Activated CD4-positive, alpha-beta T cell treated with anti-CD3 and anti-CD28 coated beads, Interleukin-2, amount 10 ng/mL, durations not matched to agents 24 days and 14 days (primary cell): ENCODE measurements at regions of chr6 and their contacts with region 1.

Region 1: DNA sequence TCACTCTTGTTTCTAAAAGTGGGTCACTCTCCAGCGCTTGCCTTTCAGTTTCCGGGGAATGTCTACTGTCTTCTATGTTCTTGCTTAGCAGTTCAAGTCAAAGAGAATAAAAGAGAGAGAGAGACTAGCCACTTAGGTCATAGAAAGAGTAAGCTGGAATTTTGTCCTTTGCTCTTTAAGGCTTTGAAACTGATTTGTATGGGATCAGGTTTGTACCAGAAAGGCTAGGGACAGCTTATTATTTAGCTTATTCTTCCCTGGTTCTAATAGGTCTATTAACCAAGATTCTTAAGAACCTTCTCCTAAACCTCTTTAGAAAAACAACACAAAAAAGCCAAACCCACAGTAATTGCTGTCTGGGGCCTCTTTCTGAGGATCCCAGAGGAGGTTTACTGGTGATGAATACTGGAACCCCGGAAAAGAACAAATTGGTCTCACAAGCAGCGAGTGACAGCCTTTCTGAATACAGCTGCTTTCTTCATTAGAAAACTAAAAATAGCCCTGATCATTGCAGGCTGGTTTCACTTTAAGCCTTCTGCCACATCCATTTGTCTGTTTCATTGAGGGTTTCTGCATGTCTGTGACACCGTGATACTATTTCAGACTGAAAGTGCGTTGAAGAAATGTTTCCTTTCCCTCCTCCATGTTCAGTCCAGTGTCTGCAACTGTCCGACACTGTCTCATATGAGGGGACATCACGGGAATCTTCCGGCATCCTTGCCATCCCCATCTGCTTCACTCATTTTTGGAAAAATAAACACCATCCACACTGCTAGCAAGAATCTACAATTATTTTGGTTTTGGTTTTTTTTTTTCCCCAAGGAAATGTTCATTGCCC is 75.1 kb upstream of the ATXN1 start:
- DNase-seq: peak; percentile 66
- H3K4me3 Mint-ChIP-seq: peak overlapping the region; percentile 61
- H3K27ac Mint-ChIP-seq: peak overlapping the region; percentile 71
- H3K4me1 Mint-ChIP-seq: peaks cover 30% of the 10 kb centered on the region
- H3K27me3 Mint-ChIP-seq: peaks cover 10% of the 10 kb centered on the region

Region 2: GRCh38 chr6:16651871-16652270 is 184.5 kb before region 1 on chr6:
- intact Hi-C with region 1: loop called (anchors 10 kb)
- DNase-seq: peak; percentile 83
- H3K4me3 Mint-ChIP-seq: peak overlapping the region; percentile 61
- H3K27ac Mint-ChIP-seq: peak overlapping the region; percentile 70
- H3K4me1 Mint-ChIP-seq: peaks cover 59% of the 10 kb centered on the region
- H3K27me3 Mint-ChIP-seq: no peaks in the 10 kb centered on the region

Region 3: DNA sequence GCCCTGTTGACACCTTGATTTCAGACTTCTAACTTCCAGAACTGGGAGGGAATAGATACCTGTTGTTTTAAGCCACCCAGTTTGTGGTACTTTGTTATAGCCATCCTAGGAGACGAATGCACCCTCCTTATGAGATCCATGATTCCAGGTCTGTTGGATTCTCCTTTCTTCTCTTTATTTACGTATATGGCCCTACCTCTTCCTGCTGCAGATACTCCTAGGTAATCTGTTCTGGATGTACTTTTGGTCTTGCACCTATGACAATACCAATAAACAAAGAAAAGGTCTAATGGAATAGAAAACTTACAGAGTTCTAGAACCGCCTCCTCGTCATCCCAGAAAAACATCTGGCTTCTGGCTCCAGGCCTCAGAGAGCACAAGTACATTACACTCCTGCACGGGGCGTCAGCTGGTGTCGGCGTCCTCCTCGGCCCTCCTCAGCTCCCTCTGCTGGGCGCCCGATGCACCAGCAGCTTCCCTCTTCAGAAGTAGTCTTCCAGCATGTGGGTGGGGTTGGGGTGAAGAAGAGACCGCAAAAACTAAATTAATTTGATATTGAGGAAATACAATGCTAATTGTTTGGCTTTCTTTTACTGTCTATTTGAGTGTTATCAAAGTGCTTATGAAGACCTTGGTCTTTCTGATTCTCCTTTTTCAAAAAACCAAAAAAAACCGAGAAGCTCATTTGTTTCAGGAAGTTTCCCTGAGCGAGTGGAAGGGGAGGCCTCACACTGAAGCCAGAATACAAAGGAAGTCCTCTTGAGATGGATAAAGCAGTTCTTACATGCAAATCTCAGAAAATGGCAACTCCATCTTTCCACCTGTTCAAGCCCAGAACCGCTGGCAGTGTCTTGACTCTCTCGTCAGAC is 65.4 kb before region 1 on chr6:
- intact Hi-C with region 1: loop called (anchors 2 kb)
- DNase-seq: peak; percentile 92
- H3K4me3 Mint-ChIP-seq: peak overlapping the region; percentile 58
- H3K27ac Mint-ChIP-seq: peak overlapping the region; percentile 21
- H3K4me1 Mint-ChIP-seq: peaks cover 49% of the 10 kb centered on the region
- H3K27me3 Mint-ChIP-seq: peaks cover 4% of the 10 kb centered on the region

Region 4: GRCh38 chr6:16949716-16950115 is 113.4 kb after region 1 on chr6:
- intact Hi-C with region 1: loop called (anchors 2 kb)
- DNase-seq: no peak
- H3K4me3 Mint-ChIP-seq: no peak overlapping the region
- H3K27ac Mint-ChIP-seq: no peak overlapping the region
- H3K4me1 Mint-ChIP-seq: peaks cover 19% of the 10 kb centered on the region
- H3K27me3 Mint-ChIP-seq: peaks cover 22% of the 10 kb centered on the region